ENCODE measurements at regions of chr10 and their contacts with region 1.

Region 1: GRCh38 chr10:68301790-68302502 is 29.9 kb upstream of the HNRNPH3 start:
- DNase-seq: no peak

Region 2: DNA sequence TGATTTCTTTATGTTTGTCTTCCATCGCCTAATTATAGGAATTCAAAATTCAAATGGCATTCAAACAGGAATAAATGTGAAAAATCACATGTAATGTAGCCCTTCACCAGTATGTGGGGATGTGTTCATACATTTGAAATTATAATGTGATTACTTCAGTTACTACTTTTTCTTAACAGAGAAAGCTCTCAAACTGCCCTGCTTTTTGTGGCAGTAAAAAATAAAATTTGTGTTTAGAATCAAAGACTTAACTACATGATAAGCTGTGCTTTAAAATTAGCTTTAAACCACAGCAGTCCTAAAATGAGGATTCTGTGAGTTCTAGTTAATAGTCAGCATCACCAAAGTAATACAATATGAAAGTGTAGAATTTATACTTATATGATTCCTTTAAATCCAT is 219.1 kb before region 1 on chr10:
- intact Hi-C with region 1: loop called (anchors 2 kb)
- DNase-seq: no peak

Region 3: DNA sequence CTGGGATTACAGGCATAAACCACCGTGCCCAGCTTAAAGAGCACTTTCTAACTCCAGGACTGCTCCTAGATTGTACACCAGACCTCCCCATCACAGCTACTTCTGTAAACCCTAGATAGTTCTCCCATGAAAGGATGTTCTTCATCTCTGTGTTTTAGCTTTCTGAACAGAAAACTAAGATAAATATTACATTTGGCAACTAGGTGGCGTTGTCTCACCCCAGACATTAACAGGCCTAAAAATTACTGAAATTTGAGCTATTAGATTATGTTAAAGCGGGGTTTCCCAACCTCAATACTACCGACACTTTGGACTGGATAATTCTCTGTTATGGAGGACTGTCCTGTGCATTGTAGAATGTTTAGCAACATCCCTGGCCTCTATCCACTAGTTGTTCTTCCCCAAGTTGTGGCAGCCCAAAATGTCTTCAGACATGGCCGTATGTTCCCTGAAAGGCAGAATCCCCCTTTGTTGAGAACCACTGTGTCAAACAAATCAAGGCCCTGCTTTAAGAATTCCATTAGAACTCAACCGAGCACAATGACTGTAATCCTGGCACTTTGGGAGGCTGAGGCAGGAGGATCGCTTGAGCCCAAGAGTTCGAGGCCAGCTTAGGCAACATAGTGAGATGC is 89.1 kb before region 1 on chr10:
- intact Hi-C with region 1: loop called (anchors 2 kb)
- DNase-seq: no peak

Measured in cardiac septum (tissue), 1 donor.